Heart left ventricle (tissue), 16 donors: ENCODE measurements at regions of chr4 and their contacts with region 1.

Region 1: DNA sequence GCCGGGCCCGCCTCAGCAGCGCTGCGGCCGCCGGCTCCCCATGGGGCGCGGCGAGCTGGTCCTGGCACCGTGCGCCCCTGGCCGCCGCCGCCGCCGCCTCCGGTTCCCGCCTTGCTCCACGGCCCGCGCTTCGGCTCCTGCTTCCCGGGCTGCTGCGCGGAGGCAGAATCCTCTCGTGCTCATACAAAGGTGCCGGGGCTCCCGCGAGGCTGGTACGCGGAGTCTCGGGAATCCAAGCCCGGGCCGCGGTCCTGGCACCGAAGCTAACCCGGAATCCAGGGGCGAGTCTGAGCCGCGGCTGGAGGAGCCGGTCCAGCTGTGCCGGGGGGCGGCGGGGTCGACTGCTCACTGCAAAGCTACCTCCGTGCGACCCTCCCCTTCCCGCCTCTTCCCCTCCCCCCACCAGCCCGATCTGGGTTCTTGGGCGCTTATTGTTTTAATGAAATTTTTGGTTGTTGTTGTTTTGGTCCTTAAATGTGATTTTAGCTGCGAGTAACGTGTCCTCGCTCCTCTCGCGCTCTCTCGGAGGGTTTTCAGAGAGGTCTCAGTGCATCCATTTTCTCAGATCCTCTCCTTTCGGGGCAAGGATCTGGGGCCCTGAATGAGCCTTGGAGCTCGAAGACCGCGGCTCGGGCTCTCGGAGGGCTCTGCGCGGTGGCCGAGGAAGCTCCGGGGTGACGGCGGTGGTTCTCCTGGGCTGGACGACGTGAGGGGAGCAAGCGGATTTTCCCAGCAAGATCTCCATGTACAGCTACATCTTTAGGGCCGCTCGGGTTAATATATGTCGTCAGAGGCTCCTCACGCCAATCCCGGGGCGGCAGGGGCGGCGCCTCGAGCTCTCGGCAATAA is at the start of gene HAND2:
- DNase-seq: peak; percentile 82 to 92 (median 87)
- ATAC-seq: peak; percentile 70 to 76 (median 74)
- H3K4me3 ChIP-seq: peak within 1 kb of the TSS; percentile 60 to 95 (median 82)
- H3K27ac ChIP-seq: peak within 1 kb of the TSS; percentile 83 to 99 (median 96)
- H3K4me1 ChIP-seq: peaks cover 0 to 7% (median 1%) of the 10 kb centered on the region in 12 donors
- H3K27me3 ChIP-seq: peaks cover 0 to 96% (median 11%) of the 10 kb centered on the region in 9 donors
- CTCF ChIP-seq: no peak
- POLR2A ChIP-seq: peak; percentile 87 to 97
- total RNA-seq, gene HAND2: 89.3 to 188 (median 129) TPM

Region 2: DNA sequence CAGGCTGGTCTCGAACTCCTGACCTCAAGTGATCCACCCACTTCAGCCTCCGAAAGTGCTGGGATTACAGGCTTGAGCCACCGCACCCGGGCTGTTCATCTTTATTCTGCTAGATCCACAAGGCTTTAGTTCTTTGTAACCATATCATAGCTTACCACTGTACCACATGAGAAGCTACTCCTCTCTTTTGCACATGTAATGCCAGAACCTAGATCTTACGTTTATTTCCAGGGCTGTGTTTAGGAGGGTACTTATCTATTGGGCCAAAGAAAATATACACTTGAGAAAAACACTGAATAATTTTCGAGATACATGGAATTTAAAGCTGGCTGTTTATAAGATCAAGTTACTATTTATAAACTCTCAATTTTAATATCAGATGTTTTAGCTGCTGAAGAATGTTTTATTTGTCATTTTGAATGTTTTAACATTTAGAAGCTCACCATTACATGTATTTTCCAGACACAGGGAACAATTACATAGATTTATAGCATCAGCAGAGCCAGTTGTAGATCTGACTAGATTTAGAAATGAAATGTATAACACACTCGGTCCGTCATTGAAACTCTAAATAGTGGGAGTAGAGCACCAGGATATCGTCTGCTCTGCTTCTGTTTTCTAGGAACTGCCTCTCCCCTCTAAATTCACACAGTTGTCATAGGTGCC is 155.6 kb after region 1 on chr4:
- intact Hi-C with region 1: loop called in 6 of 10 experiments (anchors 2 to 10 kb)
- DNase-seq: no peak
- ATAC-seq: no peak
- H3K4me3 ChIP-seq: no peak overlapping the region
- H3K27ac ChIP-seq: peak overlapping the region; percentile 56 to 91 (median 82)
- H3K4me1 ChIP-seq: peaks cover 0 to 31% (median 8%) of the 10 kb centered on the region in 12 donors
- H3K27me3 ChIP-seq: no peaks in the 10 kb centered on the region
- CTCF ChIP-seq: no peak
- POLR2A ChIP-seq: no peak

Region 3: DNA sequence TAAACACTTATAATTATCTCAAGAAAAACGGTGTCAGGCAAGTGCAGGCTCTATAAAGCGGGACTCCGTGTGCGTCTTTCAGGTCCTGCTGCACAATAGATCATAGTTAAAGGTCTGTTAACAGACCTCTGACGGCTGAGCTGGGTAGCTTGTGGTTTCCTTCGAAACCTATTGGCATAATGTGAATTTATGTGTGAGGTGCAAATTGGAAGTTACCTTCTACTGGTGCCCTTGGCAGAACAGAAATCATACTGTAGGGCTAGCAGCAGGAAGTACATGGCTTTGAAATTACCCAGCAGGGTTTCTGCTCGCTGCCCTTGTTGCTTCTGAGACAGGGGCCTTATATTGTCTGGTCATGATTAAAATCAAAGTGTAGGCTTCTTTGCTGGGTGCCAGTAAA is 216.7 kb after region 1 on chr4:
- intact Hi-C with region 1: loop called in 9 of 10 experiments (anchors 2 to 10 kb)
- DNase-seq: no peak
- ATAC-seq: peak; percentile 54 to 66 (median 60)
- H3K4me3 ChIP-seq: peak overlapping the region in 4 of 12 donors; percentile 2 to 8 (median 6)
- H3K27ac ChIP-seq: peak overlapping the region; percentile 51 to 90 (median 76)
- H3K4me1 ChIP-seq: peaks cover 0 to 27% (median 0%) of the 10 kb centered on the region in 12 donors
- H3K27me3 ChIP-seq: no peaks in the 10 kb centered on the region
- CTCF ChIP-seq: no peak
- POLR2A ChIP-seq: no peak